Activated T-helper 2 cell treated with anti-CD3 and anti-CD28 coated beads, Interferon-gamma antibody, Interleukin-2, Interleukin-4, amounts not matched to agents 10 μg/mL and 5 μg/mL and 100 μg/mL, durations not matched to agents 14 hours and 24 hours and 36 hours (primary cell): ENCODE measurements at regions of chr12 and their contacts with region 1.

Region 1: DNA sequence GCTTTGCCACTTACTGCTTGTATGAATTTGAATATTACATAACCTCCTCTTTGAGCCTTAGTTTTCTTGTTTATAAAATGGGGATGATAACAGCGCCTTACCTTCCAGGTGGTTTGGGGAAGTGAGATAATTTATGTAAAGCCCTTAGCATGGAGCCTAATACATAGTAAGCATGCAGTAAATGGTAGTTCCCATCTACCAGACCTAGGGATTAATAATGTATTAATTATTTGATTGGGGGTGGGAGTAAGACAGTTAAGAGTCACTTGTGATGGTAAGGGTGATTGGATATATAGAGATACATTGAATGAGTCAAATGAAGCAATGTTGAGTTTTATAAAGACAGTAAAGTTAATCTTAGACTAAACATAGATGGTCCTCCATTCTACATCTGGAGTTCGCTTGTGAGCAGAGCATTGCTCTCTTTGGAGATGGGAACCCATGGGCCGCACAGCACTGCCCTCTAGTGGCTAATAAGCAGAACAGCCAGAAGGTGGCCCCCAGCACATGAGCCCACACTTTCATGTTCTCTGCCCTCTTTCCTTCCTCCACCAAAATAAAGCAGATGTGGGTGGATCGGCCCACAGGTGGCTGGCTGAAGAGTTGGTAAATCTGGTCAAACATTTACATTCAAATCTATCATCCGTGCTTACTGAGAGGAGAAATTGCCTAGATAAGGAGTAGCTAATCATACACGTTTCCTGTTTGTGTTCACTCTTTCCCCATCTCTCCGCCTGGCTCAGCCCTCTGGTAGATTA is 26.5 kb upstream of the TAMALIN start:
- DNase-seq: peak; percentile 54
- H3K4me3 Mint-ChIP-seq: no peak overlapping the region
- H3K27ac Mint-ChIP-seq: no peak overlapping the region
- H3K4me1 Mint-ChIP-seq: peaks cover 28% of the 10 kb centered on the region
- H3K27me3 Mint-ChIP-seq: peaks cover 32% of the 10 kb centered on the region

Region 2: DNA sequence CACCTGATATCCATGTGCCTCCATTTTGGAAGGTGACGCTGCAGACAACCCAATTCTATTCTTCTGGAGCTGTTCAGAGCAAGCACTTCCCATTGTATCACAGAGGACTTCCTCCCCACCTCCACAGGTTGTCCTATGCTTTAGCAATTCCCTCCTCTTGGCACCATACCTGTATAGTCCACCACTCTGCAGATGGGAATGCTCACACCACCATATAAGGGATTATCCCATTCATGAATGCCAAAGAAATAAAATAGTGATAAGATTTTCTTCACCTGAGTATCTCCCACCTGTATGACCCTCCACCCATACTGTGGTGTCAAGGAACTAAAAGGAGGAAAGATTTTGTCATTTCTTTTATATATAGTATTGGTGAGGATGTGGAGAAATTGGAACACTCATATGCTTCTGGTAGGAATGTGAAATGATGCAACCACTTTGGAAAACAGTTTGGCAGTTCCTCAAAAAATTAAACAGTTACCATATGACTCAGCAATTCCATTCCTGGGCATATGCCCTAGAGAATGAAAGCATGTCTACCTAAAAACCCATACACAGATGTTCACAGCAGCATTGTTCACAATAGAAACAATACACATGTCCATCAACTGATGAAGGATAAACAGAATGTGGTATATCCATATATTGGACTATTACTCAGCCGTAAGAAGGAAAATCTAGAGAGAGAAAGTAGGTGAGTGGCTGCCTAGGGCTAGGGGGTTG is 206.9 kb before region 1 on chr12:
- intact Hi-C with region 1: no loop called
- DNase-seq: no peak
- H3K4me3 Mint-ChIP-seq: no peak overlapping the region
- H3K27ac Mint-ChIP-seq: no peak overlapping the region
- H3K4me1 Mint-ChIP-seq: no peaks in the 10 kb centered on the region
- H3K27me3 Mint-ChIP-seq: peaks cover 3% of the 10 kb centered on the region

Region 3: DNA sequence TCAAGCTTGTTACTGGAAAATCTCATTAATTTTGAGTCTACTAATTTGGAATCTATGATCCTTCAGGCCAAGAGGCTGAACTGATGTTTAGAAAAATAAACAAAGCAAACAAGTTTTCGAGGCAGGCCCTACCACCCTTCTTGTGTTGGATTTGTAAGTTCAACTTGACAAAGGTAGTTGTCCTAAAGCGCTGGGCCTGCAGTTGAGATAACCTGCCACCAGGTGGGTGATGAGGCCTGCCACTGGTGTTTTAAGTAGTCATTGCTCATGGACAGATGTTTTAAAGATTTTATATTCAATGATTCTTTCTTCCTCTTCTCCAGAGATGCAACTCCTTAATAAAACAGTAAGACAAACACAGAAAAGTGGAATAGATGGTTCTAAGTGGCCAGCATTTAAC is 53.5 kb before region 1 on chr12:
- intact Hi-C with region 1: loop called (anchors 1 kb)
- DNase-seq: peak; percentile 18
- H3K4me3 Mint-ChIP-seq: no peak overlapping the region
- H3K27ac Mint-ChIP-seq: no peak overlapping the region
- H3K4me1 Mint-ChIP-seq: peaks cover 3% of the 10 kb centered on the region
- H3K27me3 Mint-ChIP-seq: peaks cover 22% of the 10 kb centered on the region

Region 4: GRCh38 chr12:51941011-51941581 is 39.1 kb before region 1 on chr12:
- intact Hi-C with region 1: no loop called
- DNase-seq: no peak
- H3K4me3 Mint-ChIP-seq: no peak overlapping the region
- H3K27ac Mint-ChIP-seq: no peak overlapping the region
- H3K4me1 Mint-ChIP-seq: no peaks in the 10 kb centered on the region
- H3K27me3 Mint-ChIP-seq: peaks cover 22% of the 10 kb centered on the region

Region 5: GRCh38 chr12:51951199-51951842 is 28.9 kb before region 1 on chr12 and contains the start of gene ACVR1B:
- intact Hi-C with region 1: loop called (anchors 2 kb)
- DNase-seq: peak; percentile 78
- H3K4me3 Mint-ChIP-seq: peak within 1 kb of the TSS; percentile 80
- H3K27ac Mint-ChIP-seq: no peak within 1 kb of the TSS
- H3K4me1 Mint-ChIP-seq: peaks cover 6% of the 10 kb centered on the region
- H3K27me3 Mint-ChIP-seq: peaks cover 73% of the 10 kb centered on the region
- total RNA-seq, gene ACVR1B: 2.4 and 2.5 TPM in 2 replicates

Region 6: DNA sequence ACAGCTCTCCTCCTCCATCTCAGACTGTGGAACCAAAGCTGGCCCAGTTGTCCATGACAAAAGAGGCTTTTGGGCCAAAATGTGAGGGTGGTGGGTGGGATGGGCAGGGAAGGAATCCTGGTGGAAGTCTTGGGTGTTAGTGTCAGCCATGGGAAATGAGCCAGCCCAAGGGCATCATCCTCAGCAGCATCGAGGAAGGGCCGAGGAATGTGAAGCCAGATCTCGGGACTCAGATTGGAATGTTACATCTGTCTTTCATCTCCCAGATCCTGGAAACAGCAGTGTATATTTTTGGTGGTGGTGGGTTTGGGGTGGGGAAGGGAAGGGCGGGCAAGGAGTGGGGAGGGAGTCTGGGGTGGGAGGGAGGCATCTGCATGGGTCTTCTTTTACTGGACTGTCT is 14.7 kb after region 1 on chr12:
- intact Hi-C with region 1: no loop called
- DNase-seq: no peak
- H3K4me3 Mint-ChIP-seq: no peak overlapping the region
- H3K27ac Mint-ChIP-seq: no peak overlapping the region
- H3K4me1 Mint-ChIP-seq: peaks cover 5% of the 10 kb centered on the region
- H3K27me3 Mint-ChIP-seq: no peaks in the 10 kb centered on the region